ENCODE measurements at regions of chr3 and their contacts with region 1.

Region 1: DNA sequence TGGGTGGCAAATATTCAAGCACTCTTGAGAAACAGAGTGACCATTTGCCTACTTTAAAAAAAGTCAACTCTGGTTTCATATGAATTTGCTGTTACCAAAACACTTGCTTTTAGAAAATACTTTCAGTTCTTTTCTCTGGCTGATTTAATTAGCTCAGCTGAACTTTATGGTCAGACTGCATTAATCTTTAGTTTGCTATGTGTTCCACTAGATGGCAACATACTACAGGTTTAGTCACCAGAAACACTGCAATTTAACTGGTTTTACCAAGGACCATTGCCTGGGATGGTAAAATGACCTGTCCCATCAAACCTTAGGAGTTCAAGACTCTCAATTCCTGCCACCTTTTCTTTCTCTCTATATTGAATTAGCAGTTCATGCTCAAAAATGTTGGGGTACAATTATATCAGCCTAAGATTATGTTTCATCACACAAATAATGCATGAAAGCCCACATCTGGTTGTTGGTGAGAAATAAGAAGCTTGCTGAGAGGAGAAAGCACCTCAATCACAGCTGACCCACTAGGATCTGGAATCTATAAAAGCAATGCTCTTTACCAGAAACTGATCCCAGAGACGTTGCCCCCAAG is 14.2 kb downstream of the EIF4E3 start:
- DNase-seq: no peak
- H3K4me3 Mint-ChIP-seq: no peak overlapping the region
- H3K27ac Mint-ChIP-seq: no peak overlapping the region
- H3K4me1 Mint-ChIP-seq: peaks cover 40% of the 10 kb centered on the region
- H3K27me3 Mint-ChIP-seq: no peaks in the 10 kb centered on the region

Region 2: GRCh38 chr3:71629711-71630110 is 81.3 kb before region 1 on chr3:
- intact Hi-C with region 1: no loop called
- DNase-seq: no peak
- H3K4me3 Mint-ChIP-seq: no peak overlapping the region
- H3K27ac Mint-ChIP-seq: no peak overlapping the region
- H3K4me1 Mint-ChIP-seq: no peaks in the 10 kb centered on the region
- H3K27me3 Mint-ChIP-seq: no peaks in the 10 kb centered on the region

Region 3: GRCh38 chr3:71859123-71859519 is 148.1 kb after region 1 on chr3:
- intact Hi-C with region 1: loop called (anchors 1 kb)
- DNase-seq: no peak
- H3K4me3 Mint-ChIP-seq: no peak overlapping the region
- H3K27ac Mint-ChIP-seq: no peak overlapping the region
- H3K4me1 Mint-ChIP-seq: peaks cover 5% of the 10 kb centered on the region
- H3K27me3 Mint-ChIP-seq: peaks cover 25% of the 10 kb centered on the region